ENCODE measurements at regions of chr19 and their contacts with region 1.

Region 1: GRCh38 chr19:47190167-47190727 is 40.8 kb downstream of the BBC3 start:
- DNase-seq: peak; percentile 47
- H3K4me3 Mint-ChIP-seq: peak overlapping the region; percentile 59
- H3K27ac Mint-ChIP-seq: peak overlapping the region; percentile 70
- H3K4me1 Mint-ChIP-seq: peaks cover 55% of the 10 kb centered on the region
- H3K27me3 Mint-ChIP-seq: no peaks in the 10 kb centered on the region

Region 2: DNA sequence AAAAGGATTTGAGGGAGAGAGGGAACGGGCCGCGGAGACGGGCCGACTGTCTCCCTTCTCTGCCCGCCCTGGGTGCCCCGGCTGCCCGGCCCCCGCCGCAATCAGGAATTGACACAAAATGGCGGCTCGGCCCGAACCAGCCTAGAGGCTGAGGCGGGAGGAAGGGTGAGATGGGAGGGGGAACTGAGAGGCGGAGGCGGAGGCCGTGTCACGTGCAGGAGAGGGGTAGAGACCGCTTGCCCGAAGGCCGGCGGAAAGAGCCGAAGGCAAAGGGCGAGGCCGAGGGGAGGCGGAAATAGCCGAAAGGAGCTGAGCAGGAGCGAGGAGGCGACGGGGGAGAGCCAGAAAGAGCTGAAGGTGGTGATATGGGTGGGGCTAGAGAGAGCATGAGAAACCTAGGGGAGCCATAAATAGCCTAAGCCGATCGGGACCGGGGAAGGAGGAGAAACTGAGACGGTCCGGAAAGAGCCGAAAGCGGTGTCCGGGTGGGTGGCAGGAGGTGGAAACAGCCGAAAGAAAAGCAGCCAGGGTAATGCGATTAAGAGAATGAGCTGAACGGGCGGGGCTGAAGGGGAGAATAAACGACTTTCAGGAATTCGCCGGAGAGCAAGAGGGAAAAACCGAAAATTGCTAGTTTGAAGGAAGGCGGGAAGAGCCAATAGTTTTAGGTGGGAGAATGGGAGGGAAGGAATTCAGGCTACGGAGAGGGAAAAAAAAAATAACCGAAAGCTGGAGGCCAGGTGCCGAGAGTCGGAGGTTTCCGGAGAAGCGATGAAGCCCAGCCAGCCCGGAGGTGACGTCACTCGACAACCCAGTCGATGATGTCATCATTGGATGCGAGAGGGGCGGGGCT is 77.0 kb before region 1 on chr19 and contains the start of gene ZC3H4:
- intact Hi-C with region 1: loop called (anchors 2 kb)
- DNase-seq: peak; percentile 100
- H3K4me3 Mint-ChIP-seq: peak within 1 kb of the TSS; percentile 95
- H3K27ac Mint-ChIP-seq: peak within 1 kb of the TSS; percentile 99
- H3K4me1 Mint-ChIP-seq: peaks cover 26% of the 10 kb centered on the region
- H3K27me3 Mint-ChIP-seq: no peaks in the 10 kb centered on the region
- total RNA-seq, gene ZC3H4: 97.1 and 104 TPM in 2 replicates

Region 3: DNA sequence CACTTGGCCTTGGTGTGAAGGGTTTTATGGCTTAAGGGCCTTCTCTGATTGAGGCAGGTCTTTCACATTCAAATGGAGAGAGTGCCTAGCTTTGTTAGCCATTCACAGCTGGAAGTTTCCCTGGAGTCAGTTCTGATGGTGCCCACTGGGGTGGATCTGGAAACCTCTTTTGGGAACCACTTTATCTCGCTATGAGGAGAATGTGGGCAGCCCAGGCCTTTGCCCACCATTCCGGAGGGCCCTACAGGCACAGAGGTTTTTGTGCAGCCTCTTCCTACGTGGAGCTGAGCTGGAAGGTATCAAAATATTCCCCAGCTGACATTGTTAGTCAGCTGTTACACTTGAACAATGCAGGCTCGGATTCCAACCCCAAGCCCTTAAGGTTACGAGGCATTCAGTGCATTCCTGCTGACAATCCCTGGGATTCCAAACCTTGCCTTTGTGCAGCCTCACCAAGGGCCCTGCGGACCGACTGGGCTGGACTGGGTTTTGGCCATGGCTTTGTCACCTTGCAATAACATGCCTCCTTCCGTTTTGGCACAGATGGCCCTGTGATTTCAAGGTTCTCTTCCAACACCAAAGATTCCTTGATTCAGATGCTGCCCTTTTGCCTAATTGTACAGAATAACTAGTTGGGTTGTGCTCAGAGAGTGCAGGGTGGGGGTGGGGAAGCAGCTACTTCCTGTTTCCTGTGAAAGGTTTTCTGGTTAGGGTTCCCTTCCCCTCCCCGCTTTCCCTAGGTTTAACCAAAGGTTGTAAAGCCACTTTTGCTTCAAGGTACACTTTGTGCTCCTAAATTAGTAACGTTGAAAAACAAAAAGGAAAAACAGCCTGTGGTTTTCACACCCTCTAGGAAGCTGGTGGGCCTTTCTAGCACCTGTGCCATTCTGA is 32.6 kb before region 1 on chr19:
- intact Hi-C with region 1: loop called (anchors 1 kb)
- DNase-seq: no peak
- H3K4me3 Mint-ChIP-seq: peak overlapping the region; percentile 31
- H3K27ac Mint-ChIP-seq: peak overlapping the region; percentile 90
- H3K4me1 Mint-ChIP-seq: peaks cover 43% of the 10 kb centered on the region
- H3K27me3 Mint-ChIP-seq: no peaks in the 10 kb centered on the region

Region 4: GRCh38 chr19:47225746-47226425 is 35.6 kb after region 1 on chr19:
- intact Hi-C with region 1: loop called (anchors 2 kb)
- DNase-seq: peak; percentile 84
- H3K4me3 Mint-ChIP-seq: peak overlapping the region; percentile 34
- H3K27ac Mint-ChIP-seq: peak overlapping the region; percentile 67
- H3K4me1 Mint-ChIP-seq: peaks cover 7% of the 10 kb centered on the region
- H3K27me3 Mint-ChIP-seq: no peaks in the 10 kb centered on the region

Region 5: GRCh38 chr19:47256688-47257443 is 66.6 kb after region 1 on chr19:
- intact Hi-C with region 1: loop called (anchors 1 kb)
- DNase-seq: peak; percentile 99
- H3K4me3 Mint-ChIP-seq: peak overlapping the region; percentile 86
- H3K27ac Mint-ChIP-seq: peak overlapping the region; percentile 87
- H3K4me1 Mint-ChIP-seq: peaks cover 22% of the 10 kb centered on the region
- H3K27me3 Mint-ChIP-seq: no peaks in the 10 kb centered on the region